ENCODE measurements at regions of chr7 and their contacts with region 1.

Region 1: DNA sequence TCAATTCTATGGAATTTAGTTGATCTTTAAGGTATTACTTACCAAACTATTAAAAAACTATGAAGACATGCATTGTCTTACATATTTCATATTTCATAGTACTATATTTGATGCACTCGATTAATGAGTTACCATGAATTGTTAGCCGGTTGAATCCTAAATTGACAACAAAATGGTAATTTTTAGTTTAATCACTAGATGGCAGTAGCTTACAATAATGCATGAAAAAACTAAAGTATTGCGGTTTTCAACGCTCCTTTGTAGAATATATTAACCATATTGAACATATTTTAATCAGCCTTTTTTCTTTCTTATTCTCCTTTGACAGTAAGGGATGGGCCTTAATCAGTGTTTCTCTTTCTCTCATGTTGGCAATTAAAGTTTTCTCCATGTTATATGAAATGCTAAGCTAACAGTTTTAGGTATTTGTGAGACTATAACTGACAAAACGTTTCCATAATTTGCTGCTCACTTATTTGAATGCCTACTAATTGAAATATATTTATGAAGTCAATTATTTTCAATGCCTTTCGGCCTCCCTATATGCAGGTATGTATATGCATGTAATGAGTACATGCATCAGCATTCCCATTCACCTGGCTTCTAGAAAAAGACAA is 48.5 kb upstream of the ARL4A start:
- H3K4me3 ChIP-seq: no peak overlapping the region
- H3K27ac ChIP-seq: no peak overlapping the region
- H3K4me1 ChIP-seq: no peaks in the 10 kb centered on the region
- CTCF ChIP-seq: no peak

Region 2: GRCh38 chr7:13262929-13263530 is 624.1 kb after region 1 on chr7:
- CTCF ChIA-PET with region 1: interaction called, 20 read pairs
- POLR2A ChIA-PET with region 1: no interaction called
- H3K4me3 ChIP-seq: no peak overlapping the region
- H3K27ac ChIP-seq: no peak overlapping the region
- H3K4me1 ChIP-seq: no peaks in the 10 kb centered on the region
- CTCF ChIP-seq: no peak

Measured in HEK293 (cell line).